Activated B cell treated with CpG ODN at 0.5 μM for 24 hours (primary cell): ENCODE measurements at regions of chr12 and their contacts with region 1.

Region 1: DNA sequence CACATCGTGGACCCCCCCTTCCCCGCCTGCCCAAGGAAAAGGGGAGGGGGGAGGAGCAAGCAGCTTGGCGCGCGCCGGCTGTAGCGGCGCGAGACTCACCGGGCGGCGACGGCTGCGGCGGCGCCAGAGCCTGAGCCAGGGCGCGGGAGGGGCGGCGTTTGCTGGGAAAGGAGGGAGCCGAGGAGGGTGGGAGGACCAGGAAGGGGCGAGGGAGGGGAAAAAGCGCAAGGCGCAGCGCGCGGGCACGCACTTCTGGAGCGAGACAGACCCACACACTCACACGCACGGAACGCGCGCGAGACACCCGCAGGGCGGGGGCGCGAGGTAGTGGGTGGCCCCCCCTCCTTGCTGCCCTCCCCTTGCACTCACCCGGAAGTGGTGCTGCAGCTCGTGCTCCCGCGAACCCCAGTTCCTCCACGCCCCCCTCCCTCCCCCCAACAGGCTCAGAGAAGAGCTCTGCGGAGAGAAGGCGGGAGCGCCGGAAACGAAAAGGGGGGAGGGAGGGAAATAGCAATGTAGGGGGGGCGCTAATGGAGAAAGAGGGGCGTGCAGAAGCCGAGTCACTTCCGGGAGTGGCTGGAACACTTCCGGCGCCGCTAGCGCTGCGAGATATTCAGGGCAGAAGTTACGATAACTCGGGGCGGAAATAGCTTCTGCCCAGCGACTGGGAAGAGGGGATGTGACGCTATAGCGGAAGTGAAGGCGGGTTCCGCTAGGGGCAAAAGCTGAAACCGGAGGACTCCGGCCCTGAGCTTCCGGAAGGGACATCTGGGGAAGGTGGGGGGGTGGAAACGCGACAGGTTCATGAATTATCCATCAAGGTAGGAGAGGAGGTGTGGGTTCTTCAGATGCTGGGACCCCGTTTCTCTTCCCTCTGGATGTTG is at the start of gene ZNF384:
- DNase-seq: peak; percentile 84
- ATAC-seq: peak; percentile 77
- H3K4me3 Mint-ChIP-seq: peak within 1 kb of the TSS; percentile 94
- H3K27ac Mint-ChIP-seq: peak within 1 kb of the TSS; percentile 96
- H3K4me1 Mint-ChIP-seq: peaks cover 52% of the 10 kb centered on the region
- H3K27me3 Mint-ChIP-seq: no peaks in the 10 kb centered on the region
- CTCF ChIP-seq: no peak
- total RNA-seq, gene ZNF384: 81.7 and 98.6 TPM in 2 replicates

Region 2: DNA sequence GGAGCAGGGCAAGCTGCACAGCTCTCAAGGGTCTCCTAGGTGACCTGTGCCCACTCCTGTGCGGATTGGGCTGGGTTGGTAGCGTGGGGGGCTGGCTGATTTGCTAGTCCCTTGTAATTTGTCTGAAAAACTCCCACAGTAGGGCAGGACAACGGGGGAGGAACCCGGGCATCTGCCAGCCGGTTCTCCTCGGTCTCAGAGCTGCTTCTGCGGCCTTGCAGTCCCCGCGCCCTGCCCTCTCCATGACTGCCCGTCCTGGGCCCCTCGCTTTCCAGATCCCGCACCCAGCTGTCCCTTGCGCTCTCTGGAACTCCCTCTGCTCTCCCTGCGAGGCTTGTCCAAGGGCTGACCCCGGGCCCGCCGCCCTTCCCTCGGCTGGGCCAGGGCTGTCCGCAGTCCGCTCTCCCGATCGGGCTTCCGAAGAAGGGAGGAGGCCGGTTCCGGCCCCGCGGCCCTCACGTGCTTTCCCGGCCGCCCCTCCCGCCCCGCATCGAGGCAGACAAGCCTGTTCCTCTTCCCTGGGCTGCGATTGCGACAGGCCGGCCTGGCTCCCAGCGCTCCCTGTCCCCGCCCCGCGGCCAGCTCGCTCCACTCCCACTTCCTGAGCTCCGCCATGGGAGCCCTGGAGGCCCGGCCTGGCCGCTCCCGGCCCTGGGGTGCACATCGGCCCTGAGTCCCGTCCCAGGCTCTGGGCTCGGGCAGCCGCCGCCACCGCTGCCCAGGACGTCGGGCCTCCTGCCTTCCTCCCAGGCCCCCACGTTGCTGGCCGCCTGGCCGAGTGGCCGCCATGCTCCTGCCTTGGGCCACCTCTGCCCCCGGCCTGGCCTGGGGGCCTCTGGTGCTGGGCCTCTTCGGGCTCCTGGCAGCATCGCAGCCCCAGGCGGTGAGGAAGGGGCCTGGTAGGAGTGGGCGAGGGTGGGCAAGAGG is 305.4 kb before region 1 on chr12 and contains the start of gene LTBR:
- CTCF ChIA-PET with region 1: no interaction called
- POLR2A ChIA-PET with region 1: no interaction called
- intact Hi-C with region 1: no loop called
- DNase-seq: no peak
- ATAC-seq: no peak
- H3K4me3 Mint-ChIP-seq: peak within 1 kb of the TSS; percentile 44
- H3K27ac Mint-ChIP-seq: no peak within 1 kb of the TSS
- H3K4me1 Mint-ChIP-seq: peaks cover 8% of the 10 kb centered on the region
- H3K27me3 Mint-ChIP-seq: peaks cover 54% of the 10 kb centered on the region
- CTCF ChIP-seq: no peak
- total RNA-seq, gene LTBR: 0.33 TPM in 1 of 2 replicates, not detected in the other

Region 3: DNA sequence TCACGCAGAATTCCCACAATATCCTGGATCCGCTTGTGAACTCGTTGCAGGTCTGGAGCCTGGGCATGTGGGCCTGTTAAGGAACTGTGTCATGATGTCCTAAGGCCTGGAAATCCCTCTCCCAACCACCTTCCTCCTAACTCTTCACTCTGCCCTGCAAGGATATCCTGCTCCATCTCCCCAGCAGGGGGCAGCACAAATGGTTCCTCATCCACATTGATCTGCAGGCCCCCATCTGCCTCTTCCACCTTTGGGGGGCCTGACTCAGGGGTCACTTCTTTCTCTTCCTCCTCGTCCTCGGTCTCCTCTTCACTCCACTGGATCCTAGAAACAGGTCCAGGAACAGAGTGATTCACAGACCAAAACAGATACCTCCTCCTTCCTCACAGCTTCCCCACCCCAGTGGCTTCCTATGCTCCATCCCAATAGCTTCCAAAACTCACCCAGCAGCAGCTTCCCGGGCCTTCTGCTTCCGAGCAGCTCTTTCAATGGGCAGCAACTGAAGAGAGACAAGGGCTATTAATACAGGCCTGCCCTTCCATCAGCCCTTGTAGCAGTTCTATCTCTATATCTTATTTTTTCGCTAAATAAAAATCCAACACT is 125.7 kb before region 1 on chr12:
- CTCF ChIA-PET with region 1: interaction called, 3 read pairs
- POLR2A ChIA-PET with region 1: interaction called, 12 read pairs
- intact Hi-C with region 1: loop called (anchors 1 kb)
- DNase-seq: peak; percentile 57
- ATAC-seq: peak; percentile 25
- H3K4me3 Mint-ChIP-seq: no peak overlapping the region
- H3K27ac Mint-ChIP-seq: no peak overlapping the region
- H3K4me1 Mint-ChIP-seq: peaks cover 29% of the 10 kb centered on the region
- H3K27me3 Mint-ChIP-seq: no peaks in the 10 kb centered on the region
- CTCF ChIP-seq: peak; percentile 57

Region 4: GRCh38 chr12:6613776-6614512 is 75.3 kb before region 1 on chr12:
- CTCF ChIA-PET with region 1: interaction called, 22 read pairs
- POLR2A ChIA-PET with region 1: interaction called, 48 read pairs
- intact Hi-C with region 1: loop called (anchors 1 kb)
- DNase-seq: peak; percentile 28
- ATAC-seq: peak; percentile 36
- H3K4me3 Mint-ChIP-seq: no peak overlapping the region
- H3K27ac Mint-ChIP-seq: peak overlapping the region; percentile 88
- H3K4me1 Mint-ChIP-seq: peaks cover 75% of the 10 kb centered on the region
- H3K27me3 Mint-ChIP-seq: no peaks in the 10 kb centered on the region
- CTCF ChIP-seq: no peak

Region 5: DNA sequence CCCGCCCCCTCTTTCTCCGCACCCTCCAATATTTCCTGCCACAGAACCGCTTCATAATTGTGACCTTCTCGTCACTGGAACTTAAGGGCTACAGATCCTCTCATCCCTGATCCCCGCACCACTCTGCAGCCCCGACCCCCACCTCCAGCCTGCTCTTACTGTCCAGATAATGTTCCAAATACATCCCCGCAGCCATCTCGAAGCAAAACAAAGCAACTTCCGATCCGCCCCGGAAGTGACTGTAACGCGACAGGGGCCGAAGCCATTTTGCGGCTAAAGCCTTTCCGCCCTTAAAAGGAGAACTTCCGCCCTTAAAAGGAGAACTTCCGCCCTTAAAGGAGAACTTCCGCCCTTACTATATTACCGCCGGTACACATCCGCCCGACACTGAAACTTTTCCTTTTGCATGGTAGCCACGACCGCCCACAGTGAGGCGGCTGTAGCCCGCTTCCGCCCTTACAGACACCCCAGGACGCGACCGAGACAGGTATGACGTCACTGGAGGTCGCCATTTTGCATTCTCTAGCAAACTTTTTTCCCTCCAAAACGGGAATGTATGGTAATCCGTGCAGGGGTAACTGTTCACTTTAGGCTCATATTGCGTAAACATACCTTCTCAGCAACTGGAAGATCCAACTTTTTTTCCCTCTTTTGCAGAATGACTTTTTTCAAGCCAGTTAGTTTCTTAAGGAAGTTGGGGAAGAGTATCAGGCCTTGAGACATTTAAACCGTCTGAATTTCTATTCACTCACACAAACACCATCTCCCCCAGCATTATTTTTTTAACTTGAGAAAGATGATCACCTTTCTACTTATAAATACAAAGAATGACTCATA is 26.1 kb before region 1 on chr12 and contains the start of gene ING4:
- CTCF ChIA-PET with region 1: interaction called, 3 read pairs
- POLR2A ChIA-PET with region 1: interaction called, 36 read pairs
- intact Hi-C with region 1: loop called (anchors 1 kb)
- DNase-seq: peak; percentile 80
- ATAC-seq: peak; percentile 97
- H3K4me3 Mint-ChIP-seq: peak within 1 kb of the TSS; percentile 97
- H3K27ac Mint-ChIP-seq: peak within 1 kb of the TSS; percentile 95
- H3K4me1 Mint-ChIP-seq: peaks cover 27% of the 10 kb centered on the region
- H3K27me3 Mint-ChIP-seq: no peaks in the 10 kb centered on the region
- CTCF ChIP-seq: no peak
- total RNA-seq, gene ING4: 31.6 and 39.2 TPM in 2 replicates

Region 6: GRCh38 chr12:6778574-6779550 is 89.6 kb after region 1 on chr12:
- CTCF ChIA-PET with region 1: no interaction called
- POLR2A ChIA-PET with region 1: interaction called, 7 read pairs
- intact Hi-C with region 1: loop called (anchors 1 kb)
- DNase-seq: peak; percentile 77
- ATAC-seq: peak; percentile 98
- H3K4me3 Mint-ChIP-seq: peak overlapping the region; percentile 74
- H3K27ac Mint-ChIP-seq: peak overlapping the region; percentile 4
- H3K4me1 Mint-ChIP-seq: peaks cover 9% of the 10 kb centered on the region
- H3K27me3 Mint-ChIP-seq: peaks cover 42% of the 10 kb centered on the region
- CTCF ChIP-seq: peak; percentile 68

Region 7: GRCh38 chr12:6861391-6861790 is 172.2 kb after region 1 on chr12:
- CTCF ChIA-PET with region 1: no interaction called
- POLR2A ChIA-PET with region 1: no interaction called
- intact Hi-C with region 1: no loop called
- DNase-seq: no peak
- ATAC-seq: no peak
- H3K4me3 Mint-ChIP-seq: no peak overlapping the region
- H3K27ac Mint-ChIP-seq: no peak overlapping the region
- H3K4me1 Mint-ChIP-seq: peaks cover 2% of the 10 kb centered on the region
- H3K27me3 Mint-ChIP-seq: no peaks in the 10 kb centered on the region
- CTCF ChIP-seq: no peak

Region 8: GRCh38 chr12:7108796-7109571 is 419.7 kb after region 1 on chr12 and contains the start of gene C1RL:
- CTCF ChIA-PET with region 1: no interaction called
- POLR2A ChIA-PET with region 1: interaction called, 11 read pairs
- intact Hi-C with region 1: no loop called
- DNase-seq: peak; percentile 83
- ATAC-seq: peak; percentile 53
- H3K4me3 Mint-ChIP-seq: peak within 1 kb of the TSS; percentile 92
- H3K27ac Mint-ChIP-seq: peak within 1 kb of the TSS; percentile 94
- H3K4me1 Mint-ChIP-seq: peaks cover 29% of the 10 kb centered on the region
- H3K27me3 Mint-ChIP-seq: no peaks in the 10 kb centered on the region
- CTCF ChIP-seq: peak; percentile 58
- total RNA-seq, gene C1RL: 13.5 and 19.2 TPM in 2 replicates